Gastrocnemius medialis (tissue), 4 donors: ENCODE measurements at regions of chr1 and their contacts with region 1.

Region 1: DNA sequence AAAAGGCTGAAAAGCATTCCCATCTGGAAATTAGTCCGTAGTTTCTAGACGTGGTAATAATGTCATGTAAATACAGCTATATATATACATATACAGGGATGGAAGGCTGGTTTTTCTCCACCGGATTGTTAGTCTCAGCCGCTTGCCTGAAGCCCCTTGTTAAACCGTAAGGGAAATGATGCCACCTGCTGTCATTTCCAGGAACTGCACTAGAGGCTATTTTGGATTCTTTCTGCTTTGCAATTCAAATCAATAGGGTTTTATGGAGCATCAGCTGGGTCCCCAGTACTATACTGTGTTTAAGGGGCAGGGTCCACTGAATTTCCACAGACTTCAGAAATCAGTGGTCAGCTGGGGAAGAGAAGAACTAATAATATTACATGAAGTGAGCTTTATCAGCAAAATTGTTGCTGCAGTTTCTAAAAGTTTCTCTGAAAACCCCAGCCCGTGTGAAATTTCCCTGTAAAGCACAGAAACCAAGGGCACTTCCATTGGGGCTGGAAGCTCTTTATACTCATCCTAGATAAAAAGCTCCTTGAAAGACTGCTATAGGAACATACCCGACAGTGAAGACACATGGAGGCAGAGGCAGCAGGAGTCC is 33.8 kb upstream of the MPZL1 start:
- DNase-seq: peak; percentile 51 to 68
- ATAC-seq: peak; percentile 38 to 39
- H3K4me3 ChIP-seq: no peak overlapping the region
- H3K27ac ChIP-seq: peak overlapping the region; percentile 82 to 92 (median 86)
- H3K4me1 ChIP-seq: peaks cover 46 to 61% of the 10 kb centered on the region in 2 donors
- H3K27me3 ChIP-seq: no peaks in the 10 kb centered on the region
- CTCF ChIP-seq: peak; percentile 91 to 96 (median 95)
- POLR2A ChIP-seq: no peak

Region 2: DNA sequence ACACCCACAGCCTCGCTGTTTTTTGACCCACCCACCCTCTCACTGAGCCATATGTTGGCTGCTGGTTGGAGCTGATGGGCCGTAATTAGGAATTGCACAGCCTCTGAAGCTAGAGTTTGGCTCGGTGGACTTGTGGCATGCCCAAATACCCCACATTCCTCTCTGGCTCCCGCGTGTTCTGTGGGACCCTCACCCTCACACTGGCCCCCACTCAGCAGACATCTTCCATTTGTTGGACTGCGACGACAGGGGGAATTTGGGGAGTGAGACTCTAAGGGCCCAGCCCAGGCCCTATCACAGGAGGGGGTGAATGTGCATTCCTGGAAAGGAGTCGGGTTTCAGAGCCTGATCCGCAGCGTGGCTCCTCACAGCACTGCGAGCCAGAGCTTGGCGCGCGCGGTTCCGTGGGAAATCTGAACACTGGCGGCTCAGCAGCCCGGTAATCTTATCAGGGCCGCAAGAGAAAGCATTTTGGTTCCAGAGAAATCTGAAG is 52.8 kb before region 1 on chr1:
- in situ Hi-C with region 1: no loop called
- intact Hi-C with region 1: loop called (anchors 2 kb)
- DNase-seq: peak in 1 of 2 donors; percentile 67
- ATAC-seq: peak; percentile 68 to 76
- H3K4me3 ChIP-seq: peak overlapping the region; percentile 10 to 24 (median 24)
- H3K27ac ChIP-seq: peak overlapping the region; percentile 90 to 96 (median 92)
- H3K4me1 ChIP-seq: peaks cover 50 to 69% of the 10 kb centered on the region in 2 donors
- H3K27me3 ChIP-seq: no peaks in the 10 kb centered on the region
- CTCF ChIP-seq: no peak
- POLR2A ChIP-seq: no peak

Region 3: GRCh38 chr1:168609133-168609715 is 921.2 kb after region 1 on chr1:
- in situ Hi-C with region 1: no loop called
- intact Hi-C with region 1: no loop called
- DNase-seq: peak; percentile 86 to 91
- ATAC-seq: peak; percentile 79 to 80
- H3K4me3 ChIP-seq: peak overlapping the region; percentile 35 to 54 (median 46)
- H3K27ac ChIP-seq: peak overlapping the region; percentile 96 to 100 (median 96)
- H3K4me1 ChIP-seq: peaks cover 72 to 79% of the 10 kb centered on the region in 2 donors
- H3K27me3 ChIP-seq: no peaks in the 10 kb centered on the region
- CTCF ChIP-seq: no peak
- POLR2A ChIP-seq: peak; percentile 51 to 87